ENCODE measurements at regions of chr18 and their contacts with region 1.

Region 1: GRCh38 chr18:57561728-57562423 is 24.6 kb downstream of the FECH start:
- DNase-seq: peak; percentile 8
- H3K4me3 Mint-ChIP-seq: no peak overlapping the region
- H3K27ac Mint-ChIP-seq: no peak overlapping the region
- H3K4me1 Mint-ChIP-seq: no peaks in the 10 kb centered on the region
- H3K27me3 Mint-ChIP-seq: no peaks in the 10 kb centered on the region

Region 2: DNA sequence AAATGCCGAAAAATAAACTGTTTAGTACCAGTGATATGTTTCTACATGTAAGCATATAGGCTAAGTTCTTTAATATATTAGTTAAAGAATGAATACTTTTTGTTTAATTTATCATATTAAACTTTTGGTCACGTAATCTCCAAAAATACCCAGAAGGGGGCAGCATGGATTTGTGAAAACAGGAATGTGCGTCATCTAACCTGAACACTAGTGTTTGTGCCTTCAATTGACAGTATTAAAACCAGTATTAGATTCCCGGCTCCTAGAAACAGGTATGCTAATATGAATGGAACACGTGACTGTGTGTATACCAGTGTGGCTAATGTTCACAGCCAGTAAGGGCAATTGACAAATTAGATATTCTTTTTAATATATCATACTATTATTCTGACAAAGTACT is 858.9 kb before region 1 on chr18:
- CTCF ChIA-PET with region 1: interaction called, 14 read pairs
- POLR2A ChIA-PET with region 1: no interaction called
- intact Hi-C with region 1: no loop called
- DNase-seq: peak; percentile 15
- H3K4me3 Mint-ChIP-seq: no peak overlapping the region
- H3K27ac Mint-ChIP-seq: no peak overlapping the region
- H3K4me1 Mint-ChIP-seq: no peaks in the 10 kb centered on the region
- H3K27me3 Mint-ChIP-seq: no peaks in the 10 kb centered on the region

Region 3: GRCh38 chr18:56748698-56749268 is 813.1 kb before region 1 on chr18:
- CTCF ChIA-PET with region 1: interaction called, 5 read pairs
- POLR2A ChIA-PET with region 1: no interaction called
- intact Hi-C with region 1: loop called (anchors 1 kb)
- DNase-seq: no peak
- H3K4me3 Mint-ChIP-seq: no peak overlapping the region
- H3K27ac Mint-ChIP-seq: no peak overlapping the region
- H3K4me1 Mint-ChIP-seq: peaks cover 26% of the 10 kb centered on the region
- H3K27me3 Mint-ChIP-seq: no peaks in the 10 kb centered on the region

Region 4: GRCh38 chr18:56789004-56789888 is 772.6 kb before region 1 on chr18:
- CTCF ChIA-PET with region 1: interaction called, 5 read pairs
- POLR2A ChIA-PET with region 1: no interaction called
- intact Hi-C with region 1: loop called (anchors 1 kb)
- DNase-seq: peak; percentile 49
- H3K4me3 Mint-ChIP-seq: no peak overlapping the region
- H3K27ac Mint-ChIP-seq: no peak overlapping the region
- H3K4me1 Mint-ChIP-seq: no peaks in the 10 kb centered on the region
- H3K27me3 Mint-ChIP-seq: no peaks in the 10 kb centered on the region

Region 5: GRCh38 chr18:56869189-56869777 is 692.6 kb before region 1 on chr18:
- CTCF ChIA-PET with region 1: interaction called, 5 read pairs
- POLR2A ChIA-PET with region 1: no interaction called
- intact Hi-C with region 1: loop called (anchors 5 kb)
- DNase-seq: no peak
- H3K4me3 Mint-ChIP-seq: no peak overlapping the region
- H3K27ac Mint-ChIP-seq: no peak overlapping the region
- H3K4me1 Mint-ChIP-seq: peaks cover 5% of the 10 kb centered on the region
- H3K27me3 Mint-ChIP-seq: no peaks in the 10 kb centered on the region

Region 6: GRCh38 chr18:57404345-57404744 is 157.5 kb before region 1 on chr18:
- CTCF ChIA-PET with region 1: no interaction called
- POLR2A ChIA-PET with region 1: no interaction called
- intact Hi-C with region 1: no loop called
- DNase-seq: no peak
- H3K4me3 Mint-ChIP-seq: no peak overlapping the region
- H3K27ac Mint-ChIP-seq: no peak overlapping the region
- H3K4me1 Mint-ChIP-seq: no peaks in the 10 kb centered on the region
- H3K27me3 Mint-ChIP-seq: peaks cover 1% of the 10 kb centered on the region

Region 7: GRCh38 chr18:57434536-57435494 is 127.1 kb before region 1 on chr18 and contains the start of gene ONECUT2:
- CTCF ChIA-PET with region 1: no interaction called
- POLR2A ChIA-PET with region 1: no interaction called
- intact Hi-C with region 1: loop called (anchors 5 kb)
- DNase-seq: peak; percentile 83
- H3K4me3 Mint-ChIP-seq: peak within 1 kb of the TSS; percentile 48
- H3K27ac Mint-ChIP-seq: peak within 1 kb of the TSS; percentile 42
- H3K4me1 Mint-ChIP-seq: peaks cover 49% of the 10 kb centered on the region
- H3K27me3 Mint-ChIP-seq: peaks cover 81% of the 10 kb centered on the region
- total RNA-seq, gene ONECUT2: 0.02 TPM in 1 of 2 experiments, not detected in the other

Region 8: GRCh38 chr18:57533006-57533867 is 28.6 kb before region 1 on chr18:
- CTCF ChIA-PET with region 1: no interaction called
- POLR2A ChIA-PET with region 1: no interaction called
- intact Hi-C with region 1: no loop called
- DNase-seq: no peak
- H3K4me3 Mint-ChIP-seq: no peak overlapping the region
- H3K27ac Mint-ChIP-seq: no peak overlapping the region
- H3K4me1 Mint-ChIP-seq: no peaks in the 10 kb centered on the region
- H3K27me3 Mint-ChIP-seq: no peaks in the 10 kb centered on the region

Measured in activated CD4-positive, alpha-beta memory T cell treated with anti-CD3 and anti-CD28 coated beads for 36 hours (primary cell).